ENCODE measurements at regions of chr17 and their contacts with region 1.

Region 1: GRCh38 chr17:8900626-8901585 is 33.4 kb upstream of the PIK3R6 start:
- DNase-seq: peak in 5 of 9 experiments; percentile 21 to 60 (median 49)
- ATAC-seq: no peak
- H3K4me3 ChIP-seq: no peak overlapping the region
- H3K4me3 Mint-ChIP-seq: peak overlapping the region; percentile 29
- H3K27ac ChIP-seq: peak overlapping the region in 1 of 2 experiments; percentile 90
- H3K27ac Mint-ChIP-seq: peak overlapping the region; percentile 93
- H3K4me1 ChIP-seq: peaks cover 58% of the 10 kb centered on the region
- H3K4me1 Mint-ChIP-seq: peaks cover 59% of the 10 kb centered on the region
- H3K27me3 ChIP-seq: no peaks in the 10 kb centered on the region
- H3K27me3 Mint-ChIP-seq: no peaks in the 10 kb centered on the region
- CTCF ChIP-seq: no peak

Region 2: DNA sequence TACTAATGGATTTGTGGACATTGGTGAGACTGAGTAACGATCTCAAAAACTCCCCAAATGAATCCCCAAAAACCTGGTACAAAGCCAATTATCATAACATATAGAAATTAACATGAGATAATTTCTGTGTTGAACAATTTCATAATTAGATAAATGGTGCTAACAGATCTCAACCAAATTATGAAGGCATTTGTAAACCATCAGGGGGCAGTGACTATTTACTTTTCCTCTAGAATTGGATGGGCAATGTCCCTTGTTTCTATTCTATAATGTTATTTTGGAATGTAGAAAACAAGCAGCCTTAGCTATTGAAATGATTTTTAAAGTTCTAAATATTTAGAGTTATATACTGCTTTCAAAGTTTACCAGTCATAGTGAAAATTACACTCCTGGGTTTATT is 328.1 kb before region 1 on chr17:
- CTCF ChIA-PET with region 1: no interaction called
- POLR2A ChIA-PET with region 1: no interaction called
- intact Hi-C with region 1: no loop called
- DNase-seq: peak in 2 of 9 experiments; percentile 3 to 20
- ATAC-seq: no peak
- H3K4me3 ChIP-seq: no peak overlapping the region
- H3K4me3 Mint-ChIP-seq: no peak overlapping the region
- H3K27ac ChIP-seq: no peak overlapping the region
- H3K27ac Mint-ChIP-seq: no peak overlapping the region
- H3K4me1 ChIP-seq: no peaks in the 10 kb centered on the region
- H3K4me1 Mint-ChIP-seq: no peaks in the 10 kb centered on the region
- H3K27me3 ChIP-seq: no peaks in the 10 kb centered on the region
- H3K27me3 Mint-ChIP-seq: peaks cover 3% of the 10 kb centered on the region
- CTCF ChIP-seq: no peak

Region 3: DNA sequence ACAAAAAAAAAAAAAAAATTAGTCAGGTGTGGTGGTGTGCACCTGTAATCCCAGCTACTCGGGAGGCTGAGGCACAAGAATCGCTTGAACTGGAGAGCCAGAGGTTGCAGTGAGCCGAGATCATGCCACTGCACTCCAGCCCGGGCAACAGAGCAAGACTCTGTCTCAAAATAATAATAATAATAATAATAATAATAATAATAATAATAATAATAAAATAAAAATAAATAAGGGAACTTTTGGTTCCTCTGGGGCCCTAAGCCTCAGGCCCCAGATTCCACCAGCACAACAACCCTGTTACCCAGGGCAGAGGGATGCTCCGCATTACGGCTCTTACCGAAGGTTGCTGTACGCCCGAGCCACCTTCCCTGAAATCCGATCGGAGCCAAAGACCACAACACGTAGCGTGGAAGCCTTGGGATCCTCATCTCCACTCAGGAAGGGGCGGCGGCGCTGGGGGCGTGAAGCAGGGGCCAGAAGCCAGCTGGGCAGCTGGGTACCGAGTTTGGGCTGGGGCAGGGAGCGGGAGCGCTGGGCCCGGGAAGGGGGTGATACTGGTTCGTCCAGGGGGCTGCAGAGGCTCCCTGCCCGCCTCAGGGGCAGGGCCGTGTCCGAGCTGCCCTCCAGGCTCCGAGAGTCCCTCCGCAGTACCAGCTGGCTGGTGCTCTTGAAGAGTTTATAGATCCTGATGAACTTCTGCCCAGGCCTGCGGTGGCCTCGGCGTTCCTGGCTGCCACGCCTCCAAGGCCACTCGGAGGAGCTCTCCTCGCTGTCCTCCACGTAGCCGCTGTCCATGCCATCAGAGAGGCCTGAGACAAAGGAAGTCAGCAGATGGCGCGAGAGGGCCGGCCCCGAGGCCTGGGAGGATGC is 12.8 kb before region 1 on chr17:
- CTCF ChIA-PET with region 1: no interaction called
- POLR2A ChIA-PET with region 1: interaction called, 9 read pairs
- intact Hi-C with region 1: loop called (anchors 1 kb)
- DNase-seq: peak in 1 of 9 experiments; percentile 9
- ATAC-seq: no peak
- H3K4me3 ChIP-seq: no peak overlapping the region
- H3K4me3 Mint-ChIP-seq: no peak overlapping the region
- H3K27ac ChIP-seq: no peak overlapping the region
- H3K27ac Mint-ChIP-seq: no peak overlapping the region
- H3K4me1 ChIP-seq: no peaks in the 10 kb centered on the region
- H3K4me1 Mint-ChIP-seq: peaks cover 5% of the 10 kb centered on the region
- H3K27me3 ChIP-seq: no peaks in the 10 kb centered on the region
- H3K27me3 Mint-ChIP-seq: no peaks in the 10 kb centered on the region
- CTCF ChIP-seq: no peak

Region 4: DNA sequence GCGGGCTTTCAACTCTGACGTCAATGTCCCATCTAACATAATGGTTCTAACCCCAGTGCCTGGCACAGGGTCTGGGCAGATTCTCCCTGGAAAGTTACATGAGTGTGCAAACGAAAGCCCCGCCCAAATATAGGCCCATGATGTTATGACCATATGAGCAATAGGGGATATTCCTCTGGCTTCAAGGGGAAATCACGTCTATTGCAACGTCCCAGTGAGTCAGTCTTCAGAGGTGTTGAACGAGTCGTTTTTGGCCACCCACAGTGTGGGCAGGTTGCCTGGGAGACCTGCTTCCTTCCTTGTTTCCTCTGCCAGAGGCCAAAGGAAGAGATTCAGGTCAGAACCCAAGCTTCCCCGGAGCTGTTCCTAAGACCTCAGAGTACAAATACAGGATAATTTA is 34.3 kb after region 1 on chr17:
- CTCF ChIA-PET with region 1: no interaction called
- POLR2A ChIA-PET with region 1: interaction called, 30 read pairs
- intact Hi-C with region 1: loop called (anchors 1 to 5 kb)
- DNase-seq: peak in 5 of 9 experiments; percentile 52 to 92 (median 72)
- ATAC-seq: peak; percentile 64
- H3K4me3 ChIP-seq: no peak overlapping the region
- H3K4me3 Mint-ChIP-seq: peak overlapping the region; percentile 4
- H3K27ac ChIP-seq: peak overlapping the region in 1 of 2 experiments; percentile 81
- H3K27ac Mint-ChIP-seq: peak overlapping the region; percentile 88
- H3K4me1 ChIP-seq: peaks cover 42% of the 10 kb centered on the region
- H3K4me1 Mint-ChIP-seq: peaks cover 75% of the 10 kb centered on the region
- H3K27me3 ChIP-seq: no peaks in the 10 kb centered on the region
- H3K27me3 Mint-ChIP-seq: no peaks in the 10 kb centered on the region
- CTCF ChIP-seq: no peak

Region 5: GRCh38 chr17:8941520-8941919 is 40.6 kb after region 1 on chr17:
- CTCF ChIA-PET with region 1: interaction called, 5 read pairs
- POLR2A ChIA-PET with region 1: interaction called, 30 read pairs
- intact Hi-C with region 1: loop called (anchors 1 to 5 kb)
- DNase-seq: peak in 8 of 9 experiments; percentile 43 to 87 (median 72)
- ATAC-seq: peak; percentile 41
- H3K4me3 ChIP-seq: peak overlapping the region; percentile 32 to 43
- H3K4me3 Mint-ChIP-seq: peak overlapping the region; percentile 63
- H3K27ac ChIP-seq: peak overlapping the region; percentile 64 to 76
- H3K27ac Mint-ChIP-seq: peak overlapping the region; percentile 97
- H3K4me1 ChIP-seq: peaks cover 79% of the 10 kb centered on the region
- H3K4me1 Mint-ChIP-seq: peaks cover 88% of the 10 kb centered on the region
- H3K27me3 ChIP-seq: no peaks in the 10 kb centered on the region
- H3K27me3 Mint-ChIP-seq: no peaks in the 10 kb centered on the region
- CTCF ChIP-seq: no peak

Region 6: DNA sequence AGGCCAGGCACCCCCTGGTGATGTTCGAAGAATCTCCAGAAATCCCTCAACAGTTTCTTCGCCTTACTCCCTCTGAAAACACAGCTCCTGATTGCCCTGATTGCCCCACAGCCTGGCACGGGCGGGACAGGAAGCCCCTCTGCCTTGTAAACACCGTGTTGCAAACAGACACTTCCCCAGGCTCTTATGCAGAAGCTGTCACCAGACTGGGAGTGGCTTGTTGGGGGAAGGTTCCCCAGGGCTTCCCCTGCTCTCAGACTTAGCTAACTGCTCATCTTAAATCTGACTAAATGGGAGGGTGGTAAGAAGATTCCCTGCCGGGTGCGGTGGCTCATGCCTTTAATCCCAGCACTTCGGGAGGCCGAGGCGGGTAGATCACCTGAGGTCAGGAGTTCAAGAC is 53.4 kb after region 1 on chr17:
- CTCF ChIA-PET with region 1: interaction called, 10 read pairs
- POLR2A ChIA-PET with region 1: interaction called, 7 read pairs
- intact Hi-C with region 1: loop called (anchors 1 to 2 kb)
- DNase-seq: peak; percentile 67 to 96 (median 83)
- ATAC-seq: peak; percentile 92
- H3K4me3 ChIP-seq: peak overlapping the region in 1 of 2 experiments; percentile 4
- H3K4me3 Mint-ChIP-seq: peak overlapping the region; percentile 83
- H3K27ac ChIP-seq: peak overlapping the region; percentile 40 to 85
- H3K27ac Mint-ChIP-seq: peak overlapping the region; percentile 99
- H3K4me1 ChIP-seq: peaks cover 89% of the 10 kb centered on the region
- H3K4me1 Mint-ChIP-seq: peaks cover 97% of the 10 kb centered on the region
- H3K27me3 ChIP-seq: no peaks in the 10 kb centered on the region
- H3K27me3 Mint-ChIP-seq: no peaks in the 10 kb centered on the region
- CTCF ChIP-seq: no peak

Region 7: GRCh38 chr17:8965394-8966168 is 64.7 kb after region 1 on chr17 and contains the start of gene PIK3R5:
- CTCF ChIA-PET with region 1: interaction called, 10 read pairs
- POLR2A ChIA-PET with region 1: interaction called, 27 read pairs
- intact Hi-C with region 1: loop called (anchors 1 kb)
- DNase-seq: peak; percentile 68 to 91 (median 79)
- ATAC-seq: peak; percentile 77
- H3K4me3 ChIP-seq: peak within 1 kb of the TSS; percentile 97 to 99
- H3K4me3 Mint-ChIP-seq: peak within 1 kb of the TSS; percentile 96
- H3K27ac ChIP-seq: peak within 1 kb of the TSS; percentile 83 to 85
- H3K27ac Mint-ChIP-seq: peak within 1 kb of the TSS; percentile 97
- H3K4me1 ChIP-seq: peaks cover 39% of the 10 kb centered on the region
- H3K4me1 Mint-ChIP-seq: peaks cover 48% of the 10 kb centered on the region
- H3K27me3 ChIP-seq: no peaks in the 10 kb centered on the region
- H3K27me3 Mint-ChIP-seq: no peaks in the 10 kb centered on the region
- CTCF ChIP-seq: no peak
- total RNA-seq, gene PIK3R5: 154 to 155 TPM